CD8-positive, alpha-beta T cell (primary cell): ENCODE measurements at regions of chr19 and their contacts with region 1.

Region 1: DNA sequence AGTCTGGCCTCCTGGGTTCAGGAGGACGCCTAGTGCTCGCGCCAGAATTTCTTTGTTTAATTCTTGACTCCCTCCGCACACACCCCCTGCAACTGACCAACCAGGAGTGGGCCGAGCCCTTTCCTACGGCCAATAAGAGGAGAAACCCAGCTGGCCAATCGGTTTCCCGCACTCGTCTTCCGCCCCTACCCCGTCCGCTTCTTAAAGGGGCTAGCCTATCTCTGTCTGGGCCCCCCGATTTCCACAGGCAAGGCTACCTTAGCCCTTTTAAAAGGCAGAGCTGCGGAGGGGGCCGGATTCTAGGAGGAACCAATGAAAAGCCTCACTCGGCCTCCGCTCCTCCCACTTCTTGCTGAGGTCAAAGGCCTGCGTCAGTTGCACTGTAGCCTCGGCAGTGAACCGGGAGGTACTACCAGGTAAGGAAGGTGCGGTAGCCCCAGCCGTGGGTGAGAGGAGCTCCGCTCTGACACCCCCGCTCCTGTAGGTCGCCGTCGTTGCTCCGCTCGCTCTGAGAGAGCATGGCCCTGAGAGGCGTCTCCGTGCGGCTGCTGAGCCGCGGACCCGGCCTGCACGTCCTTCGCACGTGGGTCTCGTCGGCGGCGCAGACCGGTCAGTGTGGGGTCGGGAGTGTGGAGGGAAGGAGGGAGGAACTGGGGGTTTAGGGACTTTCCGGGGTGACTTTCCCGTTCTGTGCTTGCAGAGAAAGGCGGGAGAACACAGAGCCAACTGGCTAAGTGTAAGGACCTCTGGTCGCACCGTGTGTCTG is at the start of gene GCDH:
- DNase-seq: peak; percentile 92 to 99 (median 95)
- ATAC-seq: peak; percentile 87
- H3K4me3 ChIP-seq: peak within 1 kb of the TSS; percentile 87 to 92
- H3K4me3 Mint-ChIP-seq: peak within 1 kb of the TSS; percentile 99
- H3K27ac ChIP-seq: peak within 1 kb of the TSS; percentile 77 to 79
- H3K27ac Mint-ChIP-seq: peak within 1 kb of the TSS; percentile 98
- H3K4me1 ChIP-seq: peaks cover 23% of the 10 kb centered on the region
- H3K4me1 Mint-ChIP-seq: peaks cover 29% of the 10 kb centered on the region
- H3K27me3 ChIP-seq: no peaks in the 10 kb centered on the region
- H3K27me3 Mint-ChIP-seq: no peaks in the 10 kb centered on the region
- CTCF ChIP-seq: no peak
- total RNA-seq, gene GCDH: 36.0 to 41.7 TPM

Region 2: GRCh38 chr19:12580163-12580694 is 310.7 kb before region 1 on chr19:
- CTCF ChIA-PET with region 1: no interaction called
- POLR2A ChIA-PET with region 1: no interaction called
- intact Hi-C with region 1: no loop called
- DNase-seq: no peak
- ATAC-seq: no peak
- H3K4me3 ChIP-seq: no peak overlapping the region
- H3K4me3 Mint-ChIP-seq: no peak overlapping the region
- H3K27ac ChIP-seq: no peak overlapping the region
- H3K27ac Mint-ChIP-seq: no peak overlapping the region
- H3K4me1 ChIP-seq: no peaks in the 10 kb centered on the region
- H3K4me1 Mint-ChIP-seq: no peaks in the 10 kb centered on the region
- H3K27me3 ChIP-seq: no peaks in the 10 kb centered on the region
- H3K27me3 Mint-ChIP-seq: no peaks in the 10 kb centered on the region
- CTCF ChIP-seq: no peak

Region 3: GRCh38 chr19:12666265-12667048 is 224.5 kb before region 1 on chr19 and contains the starts of genes MAN2B1 and WDR83:
- CTCF ChIA-PET with region 1: no interaction called
- POLR2A ChIA-PET with region 1: no interaction called
- intact Hi-C with region 1: no loop called
- DNase-seq: peak; percentile 57 to 92 (median 77)
- ATAC-seq: peak; percentile 72
- H3K4me3 ChIP-seq: peak within 1 kb of the TSS; percentile 82 to 84
- H3K4me3 Mint-ChIP-seq: peak within 1 kb of the TSS; percentile 90
- H3K27ac ChIP-seq: peak within 1 kb of the TSS; percentile 69 to 99
- H3K27ac Mint-ChIP-seq: peak within 1 kb of the TSS; percentile 94
- H3K4me1 ChIP-seq: peaks cover 46% of the 10 kb centered on the region
- H3K4me1 Mint-ChIP-seq: peaks cover 54% of the 10 kb centered on the region
- H3K27me3 ChIP-seq: no peaks in the 10 kb centered on the region
- H3K27me3 Mint-ChIP-seq: no peaks in the 10 kb centered on the region
- CTCF ChIP-seq: no peak
- total RNA-seq, gene MAN2B1: 74.8 to 82.2 TPM
- total RNA-seq, gene WDR83: 7.4 to 10.0 TPM

Region 4: GRCh38 chr19:12867120-12868099 is 23.6 kb before region 1 on chr19:
- CTCF ChIA-PET with region 1: interaction called, 18 read pairs
- POLR2A ChIA-PET with region 1: no interaction called
- intact Hi-C with region 1: loop called in 1 of 2 experiments (anchors 2 kb)
- DNase-seq: peak; percentile 39 to 84 (median 71)
- ATAC-seq: peak; percentile 86
- H3K4me3 ChIP-seq: peak overlapping the region; percentile 57 to 87
- H3K4me3 Mint-ChIP-seq: peak overlapping the region; percentile 86
- H3K27ac ChIP-seq: no peak overlapping the region
- H3K27ac Mint-ChIP-seq: peak overlapping the region; percentile 18
- H3K4me1 ChIP-seq: peaks cover 5% of the 10 kb centered on the region
- H3K4me1 Mint-ChIP-seq: peaks cover 9% of the 10 kb centered on the region
- H3K27me3 ChIP-seq: peaks cover 0 to 3% of the 10 kb centered on the region in 2 experiments
- H3K27me3 Mint-ChIP-seq: peaks cover 4% of the 10 kb centered on the region
- CTCF ChIP-seq: no peak

Region 5: DNA sequence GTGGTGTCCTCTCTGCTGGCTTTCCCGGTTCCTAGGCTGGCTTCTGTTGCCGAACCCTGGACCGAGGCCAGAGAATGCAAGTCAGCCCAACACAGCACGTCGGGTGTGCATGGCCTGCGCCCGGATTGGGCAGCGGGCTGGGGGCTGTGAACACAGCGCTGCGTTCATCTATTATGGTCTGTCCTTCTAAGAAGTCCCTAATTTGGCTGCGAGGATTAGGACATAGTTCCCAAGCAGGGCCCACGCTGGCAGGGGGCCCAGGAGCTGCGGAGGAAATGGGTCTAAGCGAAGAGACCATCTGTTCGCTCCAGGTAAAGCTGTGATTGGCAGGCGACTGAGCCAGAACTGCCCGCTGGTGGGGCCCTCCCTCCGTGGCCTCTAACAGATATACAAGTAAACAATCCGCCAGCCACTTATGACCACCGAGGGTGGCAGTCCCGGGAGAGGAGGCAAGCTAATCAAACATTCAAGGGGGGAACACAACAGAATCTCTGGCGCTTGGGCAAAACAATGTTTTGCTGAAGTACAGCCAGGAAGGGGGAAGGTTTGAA is 22.1 kb after region 1 on chr19:
- CTCF ChIA-PET with region 1: interaction called, 3 read pairs
- POLR2A ChIA-PET with region 1: interaction called, 25 read pairs
- intact Hi-C with region 1: no loop called
- DNase-seq: no peak
- ATAC-seq: no peak
- H3K4me3 ChIP-seq: no peak overlapping the region
- H3K4me3 Mint-ChIP-seq: no peak overlapping the region
- H3K27ac ChIP-seq: peak overlapping the region in 1 of 2 experiments; percentile 63
- H3K27ac Mint-ChIP-seq: peak overlapping the region; percentile 97
- H3K4me1 ChIP-seq: peaks cover 22% of the 10 kb centered on the region
- H3K4me1 Mint-ChIP-seq: peaks cover 27% of the 10 kb centered on the region
- H3K27me3 ChIP-seq: no peaks in the 10 kb centered on the region
- H3K27me3 Mint-ChIP-seq: no peaks in the 10 kb centered on the region
- CTCF ChIP-seq: no peak